Activated T-helper 1 cell treated with anti-CD3 and anti-CD28 coated beads, Interleukin-12 subunit alpha, Interleukin-12 subunit beta, Interleukin-2, Interleukin-4 antibody, amounts not matched to agents 30 ng/mL and 10 ng/mL and 1 ng/mL, durations not matched to agents 14 hours and 24 hours and 36 hours (primary cell): ENCODE measurements at regions of chr10 and their contacts with region 1.

Region 1: GRCh38 chr10:122515588-122516231 is 44.8 kb upstream of the DMBT1 start:
- DNase-seq: peak; percentile 17
- H3K4me3 Mint-ChIP-seq: peak overlapping the region; percentile 11
- H3K27ac Mint-ChIP-seq: peak overlapping the region; percentile 35
- H3K4me1 Mint-ChIP-seq: peaks cover 22% of the 10 kb centered on the region
- H3K27me3 Mint-ChIP-seq: peaks cover 6% of the 10 kb centered on the region

Region 2: GRCh38 chr10:122490786-122491680 is 24.7 kb before region 1 on chr10:
- intact Hi-C with region 1: loop called (anchors 1 kb)
- DNase-seq: peak; percentile 2
- H3K4me3 Mint-ChIP-seq: no peak overlapping the region
- H3K27ac Mint-ChIP-seq: no peak overlapping the region
- H3K4me1 Mint-ChIP-seq: peaks cover 9% of the 10 kb centered on the region
- H3K27me3 Mint-ChIP-seq: peaks cover 15% of the 10 kb centered on the region

Region 3: DNA sequence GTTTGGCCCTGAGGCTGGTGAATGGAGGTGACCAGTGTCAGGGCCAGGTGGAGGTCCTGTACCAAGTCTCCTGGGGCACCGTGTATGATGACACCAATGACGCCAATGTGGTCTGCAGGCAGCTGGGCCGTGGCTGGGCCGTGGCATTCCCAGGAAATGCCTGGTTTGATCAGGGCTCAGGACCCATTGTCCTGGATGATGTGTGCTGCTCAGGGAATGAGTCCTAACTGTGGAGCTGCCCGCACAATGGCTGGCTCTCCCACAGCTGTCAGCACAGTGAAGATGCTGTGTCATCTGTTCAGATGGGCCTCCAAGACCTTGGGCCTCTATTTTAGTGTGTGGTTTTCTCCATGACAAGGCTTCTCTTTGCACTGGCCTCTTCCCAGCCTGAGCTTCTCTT is 108.8 kb after region 1 on chr10:
- intact Hi-C with region 1: no loop called
- DNase-seq: no peak
- H3K4me3 Mint-ChIP-seq: no peak overlapping the region
- H3K27ac Mint-ChIP-seq: no peak overlapping the region
- H3K4me1 Mint-ChIP-seq: no peaks in the 10 kb centered on the region
- H3K27me3 Mint-ChIP-seq: no peaks in the 10 kb centered on the region